MCF 10A (cell line): ENCODE measurements at regions of chr2 and their contacts with region 1.

Region 1: DNA sequence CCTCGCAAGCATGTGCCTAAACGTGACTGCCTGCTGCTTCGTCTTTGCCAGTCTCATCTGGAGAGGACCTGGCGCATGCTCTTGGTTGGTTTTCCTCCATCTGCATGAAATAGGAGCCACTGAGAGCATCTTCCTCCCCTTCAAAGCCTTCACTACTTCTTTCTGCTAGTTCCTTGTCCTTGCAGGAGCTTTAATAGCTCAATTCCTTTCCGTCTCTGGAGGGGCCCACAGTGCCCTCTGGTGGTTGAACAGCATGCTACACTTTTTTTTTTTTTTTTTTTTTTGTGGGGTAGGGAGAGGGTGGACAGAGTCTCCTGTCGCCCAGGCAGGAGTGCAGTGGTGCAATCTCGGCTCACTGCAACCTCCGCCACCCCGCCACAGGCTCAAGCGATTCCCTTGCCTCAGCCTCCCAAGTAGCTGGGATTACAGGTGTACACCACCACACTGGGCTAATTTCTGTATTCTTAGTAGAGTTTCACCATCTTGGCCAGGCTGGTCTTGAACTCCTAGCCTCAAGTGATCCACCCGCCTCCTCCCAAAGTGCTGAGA is 59.6 kb downstream of the SP110 start:
- DNase-seq: peak; percentile 65
- H3K4me3 Mint-ChIP-seq: no peak overlapping the region
- H3K27ac Mint-ChIP-seq: no peak overlapping the region
- H3K4me1 Mint-ChIP-seq: no peaks in the 10 kb centered on the region
- H3K27me3 Mint-ChIP-seq: no peaks in the 10 kb centered on the region
- CTCF ChIP-seq: peak; percentile 72

Region 2: DNA sequence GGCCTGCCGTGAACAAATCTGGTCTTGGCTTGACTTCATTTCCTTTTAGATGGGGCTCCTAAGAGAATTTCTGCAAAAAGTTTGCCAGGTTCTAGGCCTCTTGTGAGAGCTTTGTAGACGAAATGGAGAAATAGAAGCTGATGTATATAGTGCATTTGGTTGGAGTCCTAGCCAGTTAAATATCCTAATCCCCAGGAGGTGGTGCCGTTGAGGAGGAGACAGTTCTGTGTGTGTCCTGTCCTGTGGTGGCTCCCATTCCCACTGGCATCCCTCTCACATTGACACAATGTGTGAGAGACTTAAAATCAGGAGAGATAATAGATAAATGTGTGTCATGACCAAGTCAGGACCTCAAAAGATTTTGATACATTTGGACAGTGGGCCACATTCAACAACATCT is 411.2 kb before region 1 on chr2:
- CTCF ChIA-PET with region 1: no interaction called
- POLR2A ChIA-PET with region 1: no interaction called
- intact Hi-C with region 1: no loop called
- DNase-seq: peak; percentile 16
- H3K4me3 Mint-ChIP-seq: no peak overlapping the region
- H3K27ac Mint-ChIP-seq: no peak overlapping the region
- H3K4me1 Mint-ChIP-seq: no peaks in the 10 kb centered on the region
- H3K27me3 Mint-ChIP-seq: no peaks in the 10 kb centered on the region
- CTCF ChIP-seq: peak; percentile 8

Region 3: GRCh38 chr2:230007931-230008707 is 152.1 kb before region 1 on chr2:
- CTCF ChIA-PET with region 1: interaction called, 54 read pairs
- POLR2A ChIA-PET with region 1: interaction called, 3 read pairs
- intact Hi-C with region 1: loop called (anchors 1 kb)
- DNase-seq: peak; percentile 82
- H3K4me3 Mint-ChIP-seq: no peak overlapping the region
- H3K27ac Mint-ChIP-seq: no peak overlapping the region
- H3K4me1 Mint-ChIP-seq: peaks cover 5% of the 10 kb centered on the region
- H3K27me3 Mint-ChIP-seq: no peaks in the 10 kb centered on the region
- CTCF ChIP-seq: peak; percentile 84

Region 4: DNA sequence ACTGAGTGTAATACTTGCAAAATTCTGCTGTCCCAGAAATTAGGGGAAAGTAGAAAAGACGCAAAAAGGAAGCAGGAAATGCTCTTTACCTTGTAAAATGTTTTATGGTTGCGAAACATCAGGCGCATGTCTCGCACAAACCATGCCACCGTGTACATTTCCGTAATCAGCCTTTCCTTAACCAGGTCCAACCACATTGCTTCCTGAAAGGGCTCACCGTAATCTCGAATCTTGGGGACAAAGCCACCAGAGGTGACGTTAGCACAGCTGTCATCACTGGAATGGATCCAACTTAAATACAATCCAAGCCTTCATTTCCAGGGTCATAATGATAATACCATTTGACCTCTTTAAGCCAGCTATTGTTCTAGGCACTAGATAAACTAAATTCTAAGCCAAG is 10.3 kb after region 1 on chr2:
- CTCF ChIA-PET with region 1: interaction called, 14 read pairs
- POLR2A ChIA-PET with region 1: no interaction called
- intact Hi-C with region 1: no loop called
- DNase-seq: no peak
- H3K4me3 Mint-ChIP-seq: no peak overlapping the region
- H3K27ac Mint-ChIP-seq: no peak overlapping the region
- H3K4me1 Mint-ChIP-seq: no peaks in the 10 kb centered on the region
- H3K27me3 Mint-ChIP-seq: no peaks in the 10 kb centered on the region
- CTCF ChIP-seq: no peak